Endothelial cell of umbilical vein (primary cell): ENCODE measurements at regions of chr9 and their contacts with region 1.

Region 1: DNA sequence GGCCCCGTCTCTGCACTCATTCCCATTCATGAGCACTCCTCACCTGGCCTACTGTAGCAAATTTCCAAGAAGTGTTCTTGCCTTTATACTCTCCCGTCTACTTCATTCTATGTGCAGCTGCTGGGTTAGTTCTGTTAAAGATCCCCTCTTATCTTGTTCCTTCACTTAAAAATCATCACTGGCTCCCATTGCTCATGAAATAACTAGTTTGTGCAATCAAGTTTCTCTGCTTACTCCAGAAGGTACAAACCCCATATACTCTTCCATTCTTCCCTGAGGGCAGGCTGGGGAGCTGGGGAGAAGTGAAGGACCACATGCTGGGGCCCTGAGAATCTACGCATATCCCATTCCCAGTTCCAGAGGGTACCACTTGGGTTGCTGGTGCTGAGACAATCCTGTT is 84.4 kb upstream of the KLF9 start:
- DNase-seq: no peak
- H3K4me3 ChIP-seq: no peak overlapping the region
- H3K27ac ChIP-seq: no peak overlapping the region
- H3K4me1 ChIP-seq: peaks cover 7% of the 10 kb centered on the region
- H3K27me3 ChIP-seq: no peaks in the 10 kb centered on the region
- CTCF ChIP-seq: no peak
- POLR2A ChIP-seq: no peak

Region 2: DNA sequence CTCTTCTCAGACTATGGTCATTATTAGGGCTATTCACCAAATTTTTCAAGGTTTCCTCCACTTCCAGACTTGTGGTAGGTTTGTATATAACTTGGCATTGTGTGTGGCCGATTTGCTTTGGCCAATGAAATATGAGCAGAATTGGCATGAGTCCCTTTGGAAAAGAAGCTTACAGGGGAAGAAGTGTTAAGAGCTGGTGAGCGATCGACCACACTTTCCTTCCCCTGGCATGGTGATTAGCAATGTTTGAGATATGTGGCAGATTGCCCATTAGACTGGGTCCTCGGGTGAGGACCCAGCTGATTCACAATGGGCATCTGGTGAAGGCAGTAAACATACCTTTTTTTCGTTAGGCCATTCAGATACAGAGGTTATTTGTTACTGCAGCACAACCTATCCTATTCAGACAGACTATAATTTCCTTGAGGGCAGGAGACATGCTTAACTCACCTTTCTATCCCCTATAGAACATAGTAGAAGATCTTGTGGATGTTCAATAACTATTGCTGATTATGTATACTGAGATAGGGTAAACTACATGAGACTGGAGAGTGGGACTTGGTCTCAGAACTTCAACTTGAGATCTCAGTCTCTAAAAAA is 21.6 kb before region 1 on chr9:
- CTCF ChIA-PET with region 1: no interaction called
- POLR2A ChIA-PET with region 1: no interaction called
- dilution Hi-C with region 1: no loop called
- intact Hi-C with region 1: no loop called
- DNase-seq: peak; percentile 32
- H3K4me3 ChIP-seq: no peak overlapping the region
- H3K27ac ChIP-seq: no peak overlapping the region
- H3K4me1 ChIP-seq: peaks cover 37% of the 10 kb centered on the region
- H3K27me3 ChIP-seq: no peaks in the 10 kb centered on the region
- CTCF ChIP-seq: no peak
- POLR2A ChIP-seq: no peak

Region 3: DNA sequence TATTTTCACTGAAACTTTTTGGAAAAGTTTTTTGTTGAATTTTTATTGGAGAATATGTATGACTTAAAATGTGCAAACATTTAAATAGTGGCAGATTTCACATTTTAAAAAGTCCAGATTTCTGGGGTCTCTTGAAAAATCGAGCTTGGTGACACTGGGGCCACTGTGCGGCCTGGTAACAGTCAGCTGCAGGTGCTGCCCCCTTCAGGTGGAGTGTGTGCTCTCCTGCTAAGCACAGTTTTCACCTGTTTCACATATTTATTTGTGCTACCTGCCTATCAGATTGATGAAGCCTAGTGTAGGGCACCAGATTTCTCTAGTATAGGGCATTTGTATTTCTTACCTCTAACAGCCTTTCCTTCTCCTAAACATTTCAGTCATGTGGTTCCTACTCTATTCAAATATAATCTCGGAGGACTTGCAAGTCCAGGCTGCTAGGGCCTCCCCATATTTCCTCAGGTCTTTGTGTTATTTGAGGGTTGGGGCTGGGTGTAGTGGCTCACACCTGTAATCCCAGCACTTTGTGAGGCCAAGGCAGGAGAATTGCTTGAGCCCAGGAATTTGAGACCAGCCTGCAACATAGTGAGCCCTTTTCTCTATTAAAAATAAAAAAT is 11.4 kb after region 1 on chr9:
- CTCF ChIA-PET with region 1: interaction called, 25 read pairs
- POLR2A ChIA-PET with region 1: no interaction called
- dilution Hi-C with region 1: no loop called
- intact Hi-C with region 1: no loop called
- DNase-seq: peak; percentile 46
- H3K4me3 ChIP-seq: no peak overlapping the region
- H3K27ac ChIP-seq: no peak overlapping the region
- H3K4me1 ChIP-seq: no peaks in the 10 kb centered on the region
- H3K27me3 ChIP-seq: no peaks in the 10 kb centered on the region
- CTCF ChIP-seq: peak; percentile 64 to 68
- POLR2A ChIP-seq: no peak